A673 (cell line): ENCODE measurements at regions of chr3 and their contacts with region 1.

Region 1: GRCh38 chr3:181709537-181710279 is 2.0 kb upstream of the SOX2 start:
- DNase-seq: peak; percentile 79
- H3K4me3 ChIP-seq: peak overlapping the region; percentile 78
- H3K27ac ChIP-seq: peak overlapping the region; percentile 63
- H3K4me1 ChIP-seq: peaks cover 41% of the 10 kb centered on the region
- H3K27me3 ChIP-seq: no peaks in the 10 kb centered on the region
- CTCF ChIP-seq: peak; percentile 89

Region 2: DNA sequence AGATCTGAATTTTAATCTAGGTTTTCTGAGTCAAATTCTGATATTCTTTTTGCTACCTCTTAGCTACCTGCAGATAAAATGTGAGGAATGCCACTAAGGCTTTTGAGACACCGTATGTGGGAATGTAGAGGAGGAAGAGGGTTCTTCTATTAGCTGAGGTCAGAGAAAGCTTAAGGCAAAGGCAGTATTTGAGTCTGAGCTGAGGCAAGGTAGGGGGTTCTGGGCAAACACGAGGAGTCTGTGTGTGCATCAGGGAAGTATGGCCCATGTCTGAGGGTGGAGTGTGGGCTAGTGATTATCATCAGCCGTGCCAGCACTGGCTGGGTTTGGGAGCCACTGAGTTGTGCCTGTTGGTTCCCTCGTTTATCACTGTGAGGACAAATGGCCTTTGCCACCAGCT is 183.1 kb after region 1 on chr3:
- CTCF ChIA-PET with region 1: interaction called, 3 read pairs
- POLR2A ChIA-PET with region 1: no interaction called
- intact Hi-C with region 1: loop called (anchors 5 kb)
- DNase-seq: no peak
- H3K4me3 ChIP-seq: no peak overlapping the region
- H3K27ac ChIP-seq: no peak overlapping the region
- H3K4me1 ChIP-seq: peaks cover 6% of the 10 kb centered on the region
- H3K27me3 ChIP-seq: no peaks in the 10 kb centered on the region
- CTCF ChIP-seq: no peak

Region 3: DNA sequence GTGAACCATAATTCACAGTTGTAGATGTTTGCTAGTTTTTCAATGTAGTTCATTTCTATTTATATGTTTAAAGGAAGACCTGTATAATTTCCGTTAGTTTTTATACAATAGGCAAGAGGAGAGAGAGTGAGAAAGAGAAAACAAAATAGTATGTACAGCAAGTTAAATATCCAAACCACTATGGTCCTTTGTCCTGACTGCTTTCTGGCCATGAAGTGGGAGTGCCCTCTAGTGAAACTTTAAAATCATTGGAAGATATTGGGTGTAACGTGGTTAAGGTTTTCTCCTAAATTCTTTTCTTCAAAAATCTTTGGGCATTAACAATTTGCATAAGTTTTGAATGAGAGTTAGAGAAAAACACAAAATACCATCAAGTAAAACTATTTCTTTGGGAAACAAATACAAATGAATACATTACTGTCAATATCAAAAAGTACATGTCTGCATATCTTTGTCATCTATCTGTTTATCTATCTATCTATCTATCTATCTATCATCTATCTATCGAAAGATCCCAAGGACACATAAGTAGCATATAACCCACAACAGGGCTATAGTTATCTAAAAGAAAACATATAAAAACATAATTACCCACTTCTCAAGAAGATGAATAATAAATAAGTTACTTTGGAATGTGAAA is 549.0 kb after region 1 on chr3:
- CTCF ChIA-PET with region 1: no interaction called
- POLR2A ChIA-PET with region 1: no interaction called
- intact Hi-C with region 1: loop called (anchors 1 kb)
- DNase-seq: peak; percentile 78
- H3K4me3 ChIP-seq: no peak overlapping the region
- H3K27ac ChIP-seq: no peak overlapping the region
- H3K4me1 ChIP-seq: peaks cover 7% of the 10 kb centered on the region
- H3K27me3 ChIP-seq: no peaks in the 10 kb centered on the region
- CTCF ChIP-seq: peak; percentile 77

Region 4: GRCh38 chr3:182490596-182491491 is 781.1 kb after region 1 on chr3:
- CTCF ChIA-PET with region 1: no interaction called
- POLR2A ChIA-PET with region 1: no interaction called
- intact Hi-C with region 1: loop called (anchors 5 kb)
- DNase-seq: peak; percentile 69
- H3K4me3 ChIP-seq: no peak overlapping the region
- H3K27ac ChIP-seq: no peak overlapping the region
- H3K4me1 ChIP-seq: peaks cover 20% of the 10 kb centered on the region
- H3K27me3 ChIP-seq: no peaks in the 10 kb centered on the region
- CTCF ChIP-seq: peak; percentile 73

Region 5: GRCh38 chr3:182683453-182683852 is 973.7 kb after region 1 on chr3:
- CTCF ChIA-PET with region 1: no interaction called
- POLR2A ChIA-PET with region 1: interaction called, 4 read pairs
- intact Hi-C with region 1: loop called (anchors 2 kb)
- DNase-seq: peak; percentile 84
- H3K4me3 ChIP-seq: peak overlapping the region; percentile 61
- H3K27ac ChIP-seq: no peak overlapping the region
- H3K4me1 ChIP-seq: peaks cover 12% of the 10 kb centered on the region
- H3K27me3 ChIP-seq: peaks cover 28% of the 10 kb centered on the region
- CTCF ChIP-seq: peak; percentile 96